ENCODE measurements at regions of chr6 and their contacts with region 1.

Region 1: DNA sequence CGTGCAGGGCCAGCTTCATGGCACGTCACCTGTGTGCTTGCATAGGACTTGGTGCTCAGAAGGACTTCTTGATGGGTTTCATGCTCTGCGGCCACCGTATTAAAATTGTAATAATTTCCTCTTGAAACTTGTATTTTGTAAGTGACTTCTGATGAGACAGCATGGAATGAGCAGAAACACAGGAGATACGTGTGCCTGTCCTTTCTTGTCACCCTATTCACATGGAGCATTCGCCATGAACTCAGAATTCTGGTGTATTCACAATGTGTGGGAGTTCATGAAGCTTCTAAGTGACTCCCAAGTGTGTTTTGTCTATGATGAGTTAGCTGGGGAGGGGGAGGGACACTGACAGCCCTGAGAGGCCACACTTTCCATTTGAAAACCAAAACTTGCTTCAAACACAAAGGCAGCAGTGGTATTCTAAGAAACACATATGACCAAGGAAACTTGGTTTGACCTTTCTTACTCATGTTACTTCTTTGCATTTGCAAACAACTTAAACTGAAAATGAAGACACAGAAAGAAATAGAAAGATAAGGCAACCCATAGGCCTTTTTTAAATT is 92.1 kb upstream of the NEDD9 start:
- DNase-seq: peak; percentile 54
- H3K4me3 Mint-ChIP-seq: peak overlapping the region; percentile 65
- H3K27ac Mint-ChIP-seq: peak overlapping the region; percentile 97
- H3K4me1 Mint-ChIP-seq: peaks cover 91% of the 10 kb centered on the region
- H3K27me3 Mint-ChIP-seq: no peaks in the 10 kb centered on the region

Region 2: DNA sequence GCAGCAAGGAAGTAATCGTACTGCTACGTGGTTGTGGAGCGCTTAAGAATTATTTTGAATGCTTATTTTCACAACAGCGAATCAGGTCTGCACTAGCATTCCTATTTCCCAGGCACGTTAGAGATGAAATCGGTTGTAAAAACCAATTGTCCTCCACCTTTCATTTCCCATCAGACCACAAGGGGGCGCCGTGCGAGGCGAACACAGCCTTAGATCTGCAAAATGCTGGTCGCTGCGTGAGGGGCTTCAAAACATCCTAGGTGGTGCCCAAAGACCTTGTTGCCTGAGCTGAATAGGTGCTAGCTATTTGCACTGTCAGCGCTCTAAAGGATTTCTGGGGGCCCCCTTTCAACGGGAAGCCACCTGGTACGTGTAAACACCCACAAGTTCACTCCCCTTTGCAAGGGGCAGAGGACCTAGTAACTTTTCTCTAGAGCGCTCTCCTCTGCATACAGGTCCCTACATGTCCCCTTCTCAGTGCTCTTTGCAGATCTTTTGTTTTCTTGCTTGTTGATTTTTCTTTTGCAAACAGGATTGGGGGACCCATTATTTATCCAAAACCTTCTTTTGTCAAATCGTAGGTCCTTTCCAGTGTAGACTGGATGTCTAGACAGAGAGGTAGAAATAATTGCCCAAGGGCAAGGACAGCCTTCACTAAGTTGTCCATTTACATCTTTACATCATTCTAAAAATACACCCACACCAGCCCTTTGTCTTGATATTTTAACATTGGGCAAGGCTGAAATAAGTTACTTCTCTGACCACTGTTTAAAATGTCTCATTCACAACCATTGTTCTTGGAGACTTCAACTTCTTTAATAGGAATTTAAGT is 151.8 kb before region 1 on chr6:
- intact Hi-C with region 1: loop called (anchors 2 kb)
- DNase-seq: peak; percentile 47
- H3K4me3 Mint-ChIP-seq: no peak overlapping the region
- H3K27ac Mint-ChIP-seq: no peak overlapping the region
- H3K4me1 Mint-ChIP-seq: peaks cover 25% of the 10 kb centered on the region
- H3K27me3 Mint-ChIP-seq: peaks cover 3% of the 10 kb centered on the region

Region 3: DNA sequence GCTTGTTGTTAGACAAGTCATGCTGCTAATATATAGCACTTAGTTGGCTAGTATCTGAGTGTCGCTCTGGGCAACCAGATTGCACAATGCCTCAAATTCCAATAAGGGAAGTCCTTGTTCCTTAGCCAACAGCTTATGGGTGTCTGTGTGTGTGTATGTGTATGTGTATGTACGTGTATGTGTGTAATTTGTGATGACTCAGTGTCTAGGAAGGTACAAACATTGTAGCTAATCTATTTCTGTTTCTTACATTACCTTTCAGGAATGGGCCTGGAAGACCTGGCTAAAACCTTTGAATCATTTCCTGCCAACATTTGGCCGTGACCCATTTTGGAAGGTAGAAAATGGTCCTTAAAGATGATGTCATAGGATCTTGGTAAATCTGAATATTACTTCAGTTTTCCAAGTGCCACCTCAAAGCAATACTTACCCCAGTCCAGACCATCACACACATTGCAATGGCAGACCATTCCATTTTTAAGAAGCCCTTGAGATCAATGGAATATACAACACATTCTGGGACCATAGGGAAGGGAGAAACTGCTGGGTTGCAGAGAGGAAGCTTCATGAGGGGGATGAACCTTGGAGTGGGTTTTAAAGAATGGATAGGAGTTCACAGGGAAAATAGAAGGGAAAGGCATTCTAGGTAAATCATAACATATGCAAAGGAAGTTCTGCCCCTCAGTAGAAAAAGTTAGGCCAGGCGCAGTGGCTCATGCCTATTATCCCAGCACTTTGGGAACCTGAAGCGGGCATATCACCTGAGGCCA is 117.2 kb before region 1 on chr6:
- intact Hi-C with region 1: no loop called
- DNase-seq: no peak
- H3K4me3 Mint-ChIP-seq: no peak overlapping the region
- H3K27ac Mint-ChIP-seq: peak overlapping the region; percentile 50
- H3K4me1 Mint-ChIP-seq: peaks cover 75% of the 10 kb centered on the region
- H3K27me3 Mint-ChIP-seq: no peaks in the 10 kb centered on the region

Region 4: GRCh38 chr6:11263291-11263775 is 61.2 kb before region 1 on chr6:
- intact Hi-C with region 1: no loop called
- DNase-seq: no peak
- H3K4me3 Mint-ChIP-seq: no peak overlapping the region
- H3K27ac Mint-ChIP-seq: no peak overlapping the region
- H3K4me1 Mint-ChIP-seq: peaks cover 53% of the 10 kb centered on the region
- H3K27me3 Mint-ChIP-seq: no peaks in the 10 kb centered on the region

Region 5: GRCh38 chr6:11343963-11344747 is 19.6 kb after region 1 on chr6:
- intact Hi-C with region 1: loop called (anchors 1 kb)
- DNase-seq: no peak
- H3K4me3 Mint-ChIP-seq: peak overlapping the region; percentile 4
- H3K27ac Mint-ChIP-seq: peak overlapping the region; percentile 61
- H3K4me1 Mint-ChIP-seq: peaks cover 90% of the 10 kb centered on the region
- H3K27me3 Mint-ChIP-seq: no peaks in the 10 kb centered on the region

Region 6: GRCh38 chr6:11366183-11366933 is 41.8 kb after region 1 on chr6:
- intact Hi-C with region 1: loop called (anchors 1 kb)
- DNase-seq: peak; percentile 60
- H3K4me3 Mint-ChIP-seq: peak overlapping the region; percentile 55
- H3K27ac Mint-ChIP-seq: peak overlapping the region; percentile 92
- H3K4me1 Mint-ChIP-seq: peaks cover 95% of the 10 kb centered on the region
- H3K27me3 Mint-ChIP-seq: no peaks in the 10 kb centered on the region

Region 7: GRCh38 chr6:11381801-11382513 is 57.4 kb after region 1 on chr6:
- intact Hi-C with region 1: loop called (anchors 1 kb)
- DNase-seq: peak; percentile 69
- H3K4me3 Mint-ChIP-seq: peak overlapping the region; percentile 92
- H3K27ac Mint-ChIP-seq: peak overlapping the region; percentile 96
- H3K4me1 Mint-ChIP-seq: peaks cover 75% of the 10 kb centered on the region
- H3K27me3 Mint-ChIP-seq: no peaks in the 10 kb centered on the region

Region 8: GRCh38 chr6:11460001-11460668 is 135.6 kb after region 1 on chr6:
- intact Hi-C with region 1: loop called (anchors 1 kb)
- DNase-seq: no peak
- H3K4me3 Mint-ChIP-seq: peak overlapping the region; percentile 61
- H3K27ac Mint-ChIP-seq: peak overlapping the region; percentile 88
- H3K4me1 Mint-ChIP-seq: peaks cover 33% of the 10 kb centered on the region
- H3K27me3 Mint-ChIP-seq: no peaks in the 10 kb centered on the region